Astrocyte of the cerebellum (primary cell): ENCODE measurements at regions of chr7 and their contacts with region 1.

Region 1: GRCh38 chr7:25069900-25070443 is 55.1 kb downstream of the CYCS start:
- DNase-seq: peak; percentile 76
- H3K4me3 ChIP-seq: no peak overlapping the region
- CTCF ChIP-seq: peak; percentile 77

Region 2: DNA sequence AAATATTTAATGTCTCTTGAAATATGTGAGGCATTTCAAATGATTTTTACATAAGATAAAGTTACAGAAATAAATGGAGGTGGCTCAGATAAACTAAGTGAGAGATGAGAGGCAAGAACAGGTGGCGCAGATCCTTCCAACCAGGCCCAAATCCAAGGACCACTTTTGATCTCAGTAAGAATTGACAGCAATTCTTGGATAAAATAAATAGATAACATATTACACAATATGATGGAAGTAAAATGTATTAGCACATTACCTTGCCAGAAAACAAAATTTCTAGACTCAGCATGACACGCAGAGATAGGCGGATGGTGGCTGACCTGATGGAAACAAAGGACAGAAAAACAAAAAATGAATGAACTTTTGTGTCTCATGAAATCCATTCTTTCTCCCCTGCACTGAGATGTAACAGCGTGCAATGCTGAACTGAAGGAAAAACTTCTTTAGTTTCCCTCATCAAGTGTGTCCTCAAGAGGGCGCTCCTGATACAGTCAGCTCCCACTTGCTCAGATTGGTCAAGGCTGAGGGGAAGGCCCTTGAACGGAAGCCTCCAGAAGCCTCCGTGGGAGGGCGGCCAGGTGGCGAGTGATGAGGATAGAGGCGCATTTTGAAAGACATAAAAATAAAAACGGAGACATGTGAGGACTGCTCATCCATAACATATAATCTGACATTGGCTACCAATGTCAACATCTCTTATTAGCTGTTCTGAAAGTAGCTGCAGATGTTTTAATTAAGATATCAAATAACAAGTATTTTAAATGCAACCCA is 249.9 kb before region 1 on chr7:
- in situ Hi-C with region 1: loop called (anchors 25 kb)
- DNase-seq: peak; percentile 84
- H3K4me3 ChIP-seq: no peak overlapping the region
- CTCF ChIP-seq: peak; percentile 92

Region 3: GRCh38 chr7:25028370-25029021 is 41.5 kb before region 1 on chr7:
- in situ Hi-C with region 1: no loop called
- DNase-seq: peak; percentile 52
- H3K4me3 ChIP-seq: no peak overlapping the region
- CTCF ChIP-seq: no peak

Region 4: DNA sequence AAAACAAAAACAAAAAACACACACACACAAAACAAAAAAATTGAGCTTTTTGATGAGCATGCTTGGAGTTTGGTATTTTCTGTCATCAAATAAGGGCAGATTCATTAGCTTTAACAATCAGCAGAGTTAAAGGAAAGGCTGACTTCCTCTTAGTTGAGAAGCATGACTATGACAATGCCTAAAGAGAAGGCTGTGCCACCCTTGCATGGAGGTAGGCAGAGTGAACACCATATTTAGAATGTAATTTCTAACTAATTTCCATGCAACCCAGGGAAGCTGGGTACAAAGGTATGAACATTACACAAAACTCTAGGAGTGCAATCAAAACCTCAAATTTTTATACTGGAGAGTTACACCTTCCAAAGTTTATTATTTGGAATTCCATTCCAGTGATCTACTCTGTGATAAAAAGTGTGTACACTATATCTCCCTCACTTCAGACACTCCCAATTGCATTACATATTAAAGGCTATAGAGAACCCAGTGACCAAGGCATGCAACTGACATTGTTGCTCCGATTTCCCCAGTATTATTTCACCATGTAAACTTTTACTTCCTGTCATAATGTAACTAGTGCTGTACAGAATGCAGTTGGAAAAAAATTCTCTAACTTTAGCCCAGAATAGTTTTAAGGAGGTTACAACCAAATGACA is 64.5 kb after region 1 on chr7:
- in situ Hi-C with region 1: no loop called
- DNase-seq: no peak
- H3K4me3 ChIP-seq: no peak overlapping the region
- CTCF ChIP-seq: no peak

Region 5: GRCh38 chr7:25148772-25149575 is 79.0 kb after region 1 on chr7:
- in situ Hi-C with region 1: no loop called
- DNase-seq: no peak
- H3K4me3 ChIP-seq: no peak overlapping the region
- CTCF ChIP-seq: no peak

Region 6: GRCh38 chr7:25515633-25516275 is 445.8 kb after region 1 on chr7:
- in situ Hi-C with region 1: no loop called
- DNase-seq: no peak
- H3K4me3 ChIP-seq: no peak overlapping the region
- CTCF ChIP-seq: no peak